ENCODE measurements at regions of chr9 and their contacts with region 1.

Region 1: DNA sequence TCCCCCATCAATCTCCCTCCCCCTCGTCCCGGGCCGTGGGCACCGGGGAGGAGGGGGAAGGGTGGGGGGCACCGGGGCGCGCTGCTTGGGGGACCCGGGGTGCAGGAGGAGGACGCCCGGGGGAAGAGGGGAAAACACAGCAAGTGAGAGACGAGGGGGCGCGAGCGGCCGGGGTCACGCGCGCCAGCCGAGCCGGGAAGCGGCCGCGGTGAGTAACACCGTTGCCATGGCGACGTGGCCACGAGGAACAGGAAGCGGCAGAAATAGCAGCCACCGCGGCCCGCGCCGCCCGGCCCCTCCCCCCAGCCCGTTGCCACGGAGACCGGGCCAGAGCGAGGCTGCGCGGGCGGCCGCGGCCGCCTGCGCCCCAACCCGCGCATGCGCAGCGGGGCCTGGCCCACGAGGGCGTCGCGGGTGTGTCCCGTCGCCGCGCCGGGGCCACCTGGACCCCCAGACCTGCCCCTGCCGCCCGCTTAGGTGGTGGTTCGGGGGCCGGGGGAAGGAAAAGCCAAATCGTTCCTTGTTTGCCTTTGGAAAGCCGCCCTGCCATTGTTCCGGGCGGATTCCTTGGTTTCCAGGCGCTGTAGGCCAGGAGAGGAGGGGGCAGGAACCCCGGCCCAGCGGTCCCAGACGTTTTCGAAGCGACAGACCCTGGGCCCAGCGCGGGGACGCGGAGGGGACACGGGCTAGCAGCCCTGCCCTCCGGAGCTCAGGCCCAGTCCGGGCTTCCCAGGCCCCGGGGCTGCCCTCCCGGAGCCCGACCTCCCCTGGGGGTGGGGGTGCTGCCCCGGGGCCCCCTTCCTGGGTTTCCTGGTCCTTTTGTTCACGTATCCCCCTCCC is 207.1 kb downstream of the C9orf50 start:
- DNase-seq: peak; percentile 97 to 100 (median 99)
- ATAC-seq: peak; percentile 76
- H3K4me3 ChIP-seq: peak overlapping the region; percentile 56 to 87
- H3K4me3 Mint-ChIP-seq: peak overlapping the region; percentile 87
- H3K27ac ChIP-seq: peak overlapping the region; percentile 99
- H3K27ac Mint-ChIP-seq: peak overlapping the region; percentile 99
- H3K4me1 ChIP-seq: peaks cover 27% of the 10 kb centered on the region
- H3K4me1 Mint-ChIP-seq: peaks cover 33% of the 10 kb centered on the region
- H3K27me3 ChIP-seq: no peaks in the 10 kb centered on the region
- H3K27me3 Mint-ChIP-seq: no peaks in the 10 kb centered on the region
- CTCF ChIP-seq: no peak

Region 2: DNA sequence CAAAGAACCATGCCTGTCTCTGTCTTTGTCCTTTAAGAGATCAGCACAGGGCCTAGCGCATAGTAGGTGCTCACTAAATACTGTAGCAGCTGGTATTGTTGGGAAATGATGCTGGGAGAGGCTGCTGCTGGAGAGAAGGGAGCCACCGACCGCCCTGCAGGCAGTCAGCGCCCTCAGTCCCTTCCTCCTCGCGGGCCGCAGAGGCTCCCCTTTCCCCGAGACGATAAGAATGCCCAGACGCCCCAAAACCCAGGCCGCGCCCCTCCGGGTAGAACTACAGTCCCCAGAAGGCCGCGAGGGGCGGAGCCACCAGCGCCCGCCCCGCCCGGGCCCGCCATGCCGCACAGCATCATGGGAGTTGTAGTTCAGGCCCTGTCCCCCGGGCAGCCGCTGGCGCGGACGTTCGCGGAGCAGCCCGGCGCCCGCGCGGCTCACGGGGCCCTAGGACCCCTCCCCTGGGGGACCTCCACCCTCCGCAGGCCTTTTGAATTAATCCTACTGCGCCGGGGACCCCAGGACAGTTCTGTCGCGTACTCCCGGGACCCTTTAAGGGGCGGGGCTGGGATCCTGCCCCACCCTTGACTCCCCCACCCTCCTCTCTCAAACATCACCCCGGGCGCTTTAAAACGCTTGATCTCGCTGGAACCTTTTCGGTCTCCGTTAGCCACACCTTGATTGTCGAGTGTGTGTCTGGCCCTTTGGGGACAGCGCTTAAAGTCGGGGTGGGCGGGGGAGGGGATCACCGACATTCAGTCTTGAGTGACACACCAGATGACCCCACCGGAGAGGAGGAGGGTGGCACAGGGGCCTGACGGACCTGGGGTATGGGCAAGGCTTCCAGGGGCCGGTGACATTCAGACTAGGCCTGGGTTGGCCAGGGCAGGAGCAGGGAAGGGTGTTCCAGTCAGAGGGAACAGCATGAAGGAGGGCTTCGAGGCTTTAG is 210.9 kb before region 1 on chr9:
- CTCF ChIA-PET with region 1: no interaction called
- POLR2A ChIA-PET with region 1: no interaction called
- intact Hi-C with region 1: loop called in 1 of 2 experiments (anchors 1 kb)
- DNase-seq: peak; percentile 84 to 96 (median 90)
- ATAC-seq: peak; percentile 93
- H3K4me3 ChIP-seq: peak overlapping the region; percentile 56 to 95
- H3K4me3 Mint-ChIP-seq: peak overlapping the region; percentile 78
- H3K27ac ChIP-seq: peak overlapping the region; percentile 62 to 65
- H3K27ac Mint-ChIP-seq: peak overlapping the region; percentile 79
- H3K4me1 ChIP-seq: peaks cover 30% of the 10 kb centered on the region
- H3K4me1 Mint-ChIP-seq: peaks cover 28% of the 10 kb centered on the region
- H3K27me3 ChIP-seq: no peaks in the 10 kb centered on the region
- H3K27me3 Mint-ChIP-seq: no peaks in the 10 kb centered on the region
- CTCF ChIP-seq: no peak

Region 3: GRCh38 chr9:129258124-129258822 is 155.5 kb before region 1 on chr9:
- CTCF ChIA-PET with region 1: no interaction called
- POLR2A ChIA-PET with region 1: no interaction called
- intact Hi-C with region 1: loop called in 1 of 2 experiments (anchors 5 kb)
- DNase-seq: peak; percentile 77 to 96 (median 89)
- ATAC-seq: peak; percentile 88
- H3K4me3 ChIP-seq: peak overlapping the region; percentile 38 to 42
- H3K4me3 Mint-ChIP-seq: peak overlapping the region; percentile 75
- H3K27ac ChIP-seq: no peak overlapping the region
- H3K27ac Mint-ChIP-seq: no peak overlapping the region
- H3K4me1 ChIP-seq: peaks cover 24% of the 10 kb centered on the region
- H3K4me1 Mint-ChIP-seq: peaks cover 23% of the 10 kb centered on the region
- H3K27me3 ChIP-seq: peaks cover 0 to 3% of the 10 kb centered on the region in 2 experiments
- H3K27me3 Mint-ChIP-seq: peaks cover 5% of the 10 kb centered on the region
- CTCF ChIP-seq: no peak

Region 4: GRCh38 chr9:129344641-129345495 is 68.9 kb before region 1 on chr9:
- CTCF ChIA-PET with region 1: no interaction called
- POLR2A ChIA-PET with region 1: no interaction called
- intact Hi-C with region 1: no loop called
- DNase-seq: no peak
- ATAC-seq: no peak
- H3K4me3 ChIP-seq: no peak overlapping the region
- H3K4me3 Mint-ChIP-seq: no peak overlapping the region
- H3K27ac ChIP-seq: no peak overlapping the region
- H3K27ac Mint-ChIP-seq: no peak overlapping the region
- H3K4me1 ChIP-seq: peaks cover 5% of the 10 kb centered on the region
- H3K4me1 Mint-ChIP-seq: peaks cover 12% of the 10 kb centered on the region
- H3K27me3 ChIP-seq: peaks cover 0 to 1% of the 10 kb centered on the region in 2 experiments
- H3K27me3 Mint-ChIP-seq: no peaks in the 10 kb centered on the region
- CTCF ChIP-seq: no peak

Region 5: GRCh38 chr9:129460323-129461261 is 46.8 kb after region 1 on chr9:
- CTCF ChIA-PET with region 1: no interaction called
- POLR2A ChIA-PET with region 1: no interaction called
- intact Hi-C with region 1: loop called (anchors 1 kb)
- DNase-seq: peak; percentile 75 to 95 (median 88)
- ATAC-seq: peak; percentile 68
- H3K4me3 ChIP-seq: peak overlapping the region; percentile 24 to 46
- H3K4me3 Mint-ChIP-seq: peak overlapping the region; percentile 78
- H3K27ac ChIP-seq: peak overlapping the region; percentile 56 to 85
- H3K27ac Mint-ChIP-seq: peak overlapping the region; percentile 90
- H3K4me1 ChIP-seq: peaks cover 38% of the 10 kb centered on the region
- H3K4me1 Mint-ChIP-seq: peaks cover 45% of the 10 kb centered on the region
- H3K27me3 ChIP-seq: no peaks in the 10 kb centered on the region
- H3K27me3 Mint-ChIP-seq: no peaks in the 10 kb centered on the region
- CTCF ChIP-seq: no peak

Region 6: DNA sequence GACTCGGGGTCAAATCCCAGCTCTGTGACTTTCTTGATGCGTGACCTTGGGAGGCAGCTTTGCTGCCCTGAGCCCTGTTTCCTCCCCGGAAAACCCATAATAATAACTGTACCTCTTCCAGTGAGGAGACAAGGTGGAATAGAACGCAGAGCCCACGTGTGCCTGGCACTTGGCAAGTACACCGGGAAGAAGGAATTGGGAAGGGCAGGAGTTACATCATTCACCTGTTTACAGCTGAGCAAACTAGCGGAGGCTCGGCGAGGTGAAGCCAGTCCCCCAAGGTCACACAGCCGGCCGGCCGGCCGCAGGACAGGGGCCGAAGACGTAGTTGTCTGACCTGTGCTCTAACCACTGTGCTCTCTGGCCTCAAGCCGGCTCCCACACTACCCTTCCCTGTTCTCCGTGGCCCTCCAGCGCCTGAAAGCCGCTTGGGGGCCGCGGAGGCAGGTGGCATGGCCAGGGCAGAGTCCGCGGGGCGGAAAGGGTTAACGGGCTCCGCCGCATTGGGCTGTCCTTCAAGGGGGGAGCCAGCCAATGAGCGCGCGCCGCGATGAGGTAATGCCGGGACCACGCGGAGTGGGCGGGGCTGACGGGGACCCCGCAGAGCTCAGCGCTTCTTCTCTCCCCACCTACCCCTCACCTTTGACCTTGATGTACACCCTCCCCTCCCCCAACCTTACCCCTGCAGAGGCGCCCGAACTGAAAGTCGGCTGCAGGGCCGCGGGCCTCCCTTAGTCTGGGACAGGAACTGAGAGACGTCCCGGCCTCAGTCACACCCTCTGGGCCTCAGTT is 82.0 kb after region 1 on chr9:
- CTCF ChIA-PET with region 1: no interaction called
- POLR2A ChIA-PET with region 1: no interaction called
- intact Hi-C with region 1: loop called in 1 of 2 experiments (anchors 1 kb)
- DNase-seq: peak; percentile 66 to 89 (median 82)
- ATAC-seq: peak; percentile 89
- H3K4me3 ChIP-seq: peak overlapping the region; percentile 75 to 77
- H3K4me3 Mint-ChIP-seq: peak overlapping the region; percentile 82
- H3K27ac ChIP-seq: peak overlapping the region in 1 of 2 experiments; percentile 38
- H3K27ac Mint-ChIP-seq: peak overlapping the region; percentile 37
- H3K4me1 ChIP-seq: peaks cover 25% of the 10 kb centered on the region
- H3K4me1 Mint-ChIP-seq: peaks cover 25% of the 10 kb centered on the region
- H3K27me3 ChIP-seq: no peaks in the 10 kb centered on the region
- H3K27me3 Mint-ChIP-seq: no peaks in the 10 kb centered on the region
- CTCF ChIP-seq: no peak